ENCODE measurements at regions of chr4 and their contacts with region 1.

Region 1: DNA sequence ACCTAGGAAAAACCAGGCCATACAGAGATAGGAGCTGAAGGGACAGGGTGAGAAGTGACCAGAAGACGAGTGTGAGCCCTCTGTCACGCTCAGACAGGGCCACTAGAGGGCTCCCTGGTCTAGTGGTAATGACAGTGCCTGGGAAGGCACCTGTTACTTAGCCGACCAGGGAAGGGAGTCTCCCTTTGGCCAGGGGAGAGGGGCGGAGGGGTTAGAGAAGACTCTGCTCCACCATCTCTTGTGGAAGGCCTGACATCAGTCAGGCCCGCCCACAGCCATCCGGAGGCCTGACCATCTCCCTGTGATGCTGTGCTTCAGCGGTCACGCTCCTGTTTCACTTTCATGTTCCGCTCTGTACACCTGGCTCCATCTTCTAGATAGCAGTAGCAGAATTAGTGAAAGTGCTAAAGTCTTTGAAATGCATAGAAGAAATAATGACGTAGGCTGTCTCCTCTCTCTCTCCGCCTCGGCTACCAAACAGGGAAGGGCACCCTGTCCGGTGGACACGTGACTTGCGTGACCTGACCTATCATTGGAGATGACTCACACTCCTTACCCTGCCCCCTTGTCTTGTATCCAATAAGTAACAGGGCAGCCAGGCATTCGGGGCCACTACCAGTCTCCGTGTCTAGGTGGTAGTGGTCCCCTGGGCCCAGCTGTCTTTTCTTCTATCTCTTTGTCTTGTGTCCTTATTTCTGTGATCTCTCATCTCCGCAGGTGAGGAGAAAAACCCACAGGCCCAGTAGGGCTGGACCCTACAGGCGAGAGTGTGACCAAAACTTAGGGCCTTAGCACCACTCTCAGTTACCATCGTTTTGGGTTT is 26.7 kb downstream of the HTT-AS start:
- DNase-seq: peak; percentile 83
- H3K4me3 Mint-ChIP-seq: peak overlapping the region; percentile 9
- H3K27ac Mint-ChIP-seq: peak overlapping the region; percentile 67
- H3K4me1 Mint-ChIP-seq: peaks cover 27% of the 10 kb centered on the region
- H3K27me3 Mint-ChIP-seq: peaks cover 8% of the 10 kb centered on the region

Region 2: DNA sequence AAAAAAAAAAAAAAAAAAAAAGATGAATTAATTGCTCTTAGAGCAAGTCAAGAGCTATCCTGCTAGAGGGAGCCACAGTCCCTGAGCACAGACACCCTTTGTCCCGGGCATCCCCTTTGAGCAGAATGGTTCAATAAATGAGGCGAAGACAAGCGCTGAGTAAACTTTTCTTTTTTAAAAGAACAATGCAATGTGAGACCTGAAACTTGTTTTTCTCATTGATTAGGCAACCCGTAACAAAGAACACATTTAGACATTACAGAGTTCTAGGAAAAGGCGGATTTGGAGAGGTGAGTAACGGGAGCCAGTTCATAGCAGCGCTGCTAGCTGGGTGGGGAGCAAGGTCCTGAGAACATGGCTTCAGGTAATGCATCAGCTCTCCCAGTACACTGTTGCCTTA is 38.3 kb before region 1 on chr4:
- intact Hi-C with region 1: no loop called
- DNase-seq: no peak
- H3K4me3 Mint-ChIP-seq: no peak overlapping the region
- H3K27ac Mint-ChIP-seq: no peak overlapping the region
- H3K4me1 Mint-ChIP-seq: peaks cover 19% of the 10 kb centered on the region
- H3K27me3 Mint-ChIP-seq: no peaks in the 10 kb centered on the region

Region 3: GRCh38 chr4:3085948-3086655 is 38.4 kb after region 1 on chr4:
- intact Hi-C with region 1: loop called (anchors 5 kb)
- DNase-seq: no peak
- H3K4me3 Mint-ChIP-seq: no peak overlapping the region
- H3K27ac Mint-ChIP-seq: peak overlapping the region; percentile 67
- H3K4me1 Mint-ChIP-seq: peaks cover 45% of the 10 kb centered on the region
- H3K27me3 Mint-ChIP-seq: no peaks in the 10 kb centered on the region

Region 4: DNA sequence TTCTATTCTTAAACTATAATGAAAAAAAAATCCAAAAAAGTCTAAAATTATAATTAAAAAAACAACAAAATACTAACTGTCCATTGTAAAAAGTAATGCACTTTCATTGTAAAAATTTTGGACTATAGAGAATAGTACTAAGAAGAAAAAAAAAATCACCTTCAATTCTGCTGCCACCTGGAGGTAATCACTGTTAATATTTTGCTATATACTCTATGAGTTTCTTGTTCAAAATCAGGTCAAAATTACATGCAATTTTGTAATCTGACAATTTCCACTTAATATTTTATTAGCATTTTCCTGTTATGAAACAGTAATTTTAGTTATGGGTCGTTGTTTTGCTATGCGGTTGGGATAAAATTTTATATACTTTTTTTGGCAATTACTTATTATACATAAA is 88.8 kb after region 1 on chr4:
- intact Hi-C with region 1: no loop called
- DNase-seq: no peak
- H3K4me3 Mint-ChIP-seq: no peak overlapping the region
- H3K27ac Mint-ChIP-seq: no peak overlapping the region
- H3K4me1 Mint-ChIP-seq: no peaks in the 10 kb centered on the region
- H3K27me3 Mint-ChIP-seq: no peaks in the 10 kb centered on the region

Region 5: DNA sequence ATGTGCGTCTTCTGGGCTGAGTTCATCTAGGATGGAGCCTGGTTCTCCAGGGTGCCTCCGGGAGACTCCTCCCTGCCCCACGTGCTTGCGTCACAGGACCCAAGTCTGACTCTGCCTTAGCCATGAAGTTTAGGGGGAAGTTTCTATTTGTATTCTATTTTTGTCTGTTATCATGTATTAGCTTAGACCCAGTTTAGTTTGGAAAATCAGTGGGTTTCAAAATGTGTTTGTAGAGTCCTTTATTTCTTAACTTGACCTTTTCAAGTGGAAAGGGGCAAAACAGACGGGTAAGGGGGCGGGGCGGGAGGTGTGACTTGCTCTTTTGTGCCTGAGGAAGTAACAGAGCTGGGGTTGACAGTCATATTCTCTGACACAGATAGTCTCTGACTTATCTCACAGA is 112.8 kb after region 1 on chr4:
- intact Hi-C with region 1: no loop called
- DNase-seq: no peak
- H3K4me3 Mint-ChIP-seq: no peak overlapping the region
- H3K27ac Mint-ChIP-seq: no peak overlapping the region
- H3K4me1 Mint-ChIP-seq: peaks cover 4% of the 10 kb centered on the region
- H3K27me3 Mint-ChIP-seq: no peaks in the 10 kb centered on the region

Region 6: DNA sequence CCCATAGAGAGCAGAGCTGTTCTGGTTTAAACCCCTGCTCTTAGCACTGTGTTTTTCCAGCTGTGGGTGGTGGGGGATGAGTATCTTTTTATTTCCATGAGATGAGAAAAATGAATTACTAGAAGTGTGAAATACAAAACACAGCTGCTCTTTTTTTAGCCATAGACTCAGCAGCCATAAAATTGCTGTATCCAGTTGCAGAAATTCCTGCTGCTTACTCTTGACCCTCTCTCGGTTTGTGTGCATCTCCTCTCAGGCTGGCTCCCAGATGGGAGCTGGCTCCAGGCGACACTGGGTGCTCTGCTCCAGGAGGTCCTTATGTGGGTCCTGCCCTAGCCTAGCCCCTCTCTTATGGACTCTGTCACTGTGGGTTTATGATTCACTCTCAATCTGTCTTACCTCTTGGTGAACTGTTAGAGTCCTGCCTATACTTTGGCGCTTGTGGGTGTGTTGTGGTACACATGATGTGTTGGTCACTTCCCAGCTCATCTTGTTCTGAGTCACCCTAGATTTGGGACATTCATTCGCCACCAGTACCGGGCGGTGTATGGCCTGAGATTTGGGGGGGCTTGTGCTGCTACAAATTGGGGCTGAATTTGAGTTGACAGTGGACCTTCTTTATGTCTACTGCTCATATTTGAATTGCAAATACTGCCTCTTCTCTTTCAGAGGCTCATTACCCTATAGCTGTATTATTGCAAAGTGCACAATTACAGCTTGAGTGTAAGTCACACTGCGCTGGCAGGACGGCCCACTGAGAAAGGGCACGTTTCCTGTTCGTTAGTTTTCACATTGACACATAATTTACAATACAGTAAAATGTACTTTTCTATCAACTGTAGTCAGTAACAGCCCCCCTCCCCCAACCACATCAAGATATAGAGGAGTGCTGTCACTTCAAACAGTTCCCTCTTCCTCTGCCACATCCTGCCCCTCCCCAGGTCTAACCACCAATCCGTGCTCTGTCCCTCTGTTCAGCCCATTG is 154.3 kb after region 1 on chr4:
- intact Hi-C with region 1: loop called (anchors 2 kb)
- DNase-seq: peak; percentile 80
- H3K4me3 Mint-ChIP-seq: peak overlapping the region; percentile 63
- H3K27ac Mint-ChIP-seq: peak overlapping the region; percentile 99
- H3K4me1 Mint-ChIP-seq: peaks cover 40% of the 10 kb centered on the region
- H3K27me3 Mint-ChIP-seq: no peaks in the 10 kb centered on the region

Measured in activated T-helper 2 cell treated with anti-CD3 and anti-CD28 coated beads, Interferon-gamma antibody, Interleukin-2, Interleukin-4, amounts not matched to agents 10 μg/mL and 5 μg/mL and 100 μg/mL, durations not matched to agents 14 hours and 24 hours and 36 hours (primary cell).